HEK293 (cell line): ENCODE measurements at regions of chr19 and their contacts with region 1.

Region 1: DNA sequence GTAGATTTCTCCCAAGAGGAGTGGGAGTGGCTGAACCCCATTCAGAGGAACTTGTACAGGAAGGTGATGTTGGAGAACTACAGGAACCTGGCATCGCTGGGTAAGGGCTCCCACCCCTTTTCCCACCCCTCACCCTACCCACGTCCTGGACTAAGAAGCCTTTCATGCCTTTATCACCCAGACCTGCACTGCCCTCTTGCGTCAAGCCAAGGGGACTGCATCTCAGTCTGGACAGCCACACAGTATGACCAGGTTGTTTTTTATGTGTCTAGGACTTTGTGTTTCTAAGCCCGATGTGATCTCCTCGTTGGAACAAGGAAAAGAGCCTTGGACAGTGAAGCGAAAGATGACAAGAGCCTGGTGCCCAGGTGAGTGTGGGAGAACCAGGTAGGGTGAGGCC is 8.8 kb downstream of the ZFP28 start:
- H3K4me3 ChIP-seq: no peak overlapping the region
- H3K27ac ChIP-seq: no peak overlapping the region
- H3K4me1 ChIP-seq: no peaks in the 10 kb centered on the region
- CTCF ChIP-seq: no peak

Region 2: GRCh38 chr19:56594783-56595547 is 47.4 kb after region 1 on chr19 and contains the start of gene ZNF71:
- CTCF ChIA-PET with region 1: no interaction called
- POLR2A ChIA-PET with region 1: interaction called, 11 read pairs
- H3K4me3 ChIP-seq: peak within 1 kb of the TSS; percentile 78
- H3K27ac ChIP-seq: peak within 1 kb of the TSS; percentile 83; the same call in 1 of the 2 replicates
- H3K4me1 ChIP-seq: no peaks in the 10 kb centered on the region
- CTCF ChIP-seq: no peak